Left lung (tissue), 14 donors: ENCODE measurements at regions of chr6 and their contacts with region 1.

Region 1: DNA sequence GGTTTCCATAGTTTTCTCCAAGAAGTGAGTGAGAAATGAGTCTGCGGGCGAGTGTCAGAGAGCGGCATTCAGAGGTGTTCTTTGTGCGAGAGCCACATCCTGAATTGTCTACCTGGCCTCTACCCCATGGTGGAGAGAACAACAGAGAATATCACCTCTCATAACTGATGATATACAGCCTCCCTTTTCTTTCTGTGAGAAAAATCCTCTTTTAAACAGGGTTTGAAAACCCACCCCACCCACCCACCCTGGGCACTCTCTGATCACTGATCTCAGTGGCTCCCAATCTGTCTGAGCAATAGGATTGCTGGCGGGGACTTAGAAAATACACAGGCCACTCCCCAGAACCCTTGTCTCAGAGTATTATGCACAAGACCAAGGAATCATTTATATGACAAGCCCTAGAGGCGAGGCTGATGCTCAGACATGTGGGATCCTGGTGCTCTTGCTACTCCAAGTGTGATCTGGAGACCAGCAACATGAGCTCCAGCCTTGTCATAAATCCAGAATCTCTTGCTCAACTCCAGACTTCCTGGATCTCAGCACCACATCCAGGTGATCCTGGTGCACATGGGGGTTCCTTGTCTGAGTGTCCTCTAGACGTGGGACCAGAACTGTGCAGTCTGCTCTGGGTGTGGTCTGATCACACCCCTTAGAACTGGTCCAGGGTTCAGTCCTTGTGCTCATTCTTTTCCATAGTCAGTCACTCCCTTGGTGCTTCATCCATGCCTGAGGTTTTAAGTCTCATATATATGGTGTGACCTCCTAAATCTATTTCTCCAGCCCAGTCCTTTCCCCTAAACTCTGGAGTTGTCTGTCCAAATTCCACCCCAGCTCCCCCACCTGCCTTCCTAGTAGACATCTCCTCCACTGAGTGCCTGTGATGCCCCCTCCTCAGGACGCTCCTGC is 5.3 kb downstream of the HLA-B start:
- DNase-seq: no peak
- ATAC-seq: no peak
- H3K4me3 ChIP-seq: no peak overlapping the region
- H3K27ac ChIP-seq: no peak overlapping the region
- H3K4me1 ChIP-seq: peaks cover 3 to 30% of the 10 kb centered on the region in 2 donors
- H3K27me3 ChIP-seq: no peaks in the 10 kb centered on the region
- CTCF ChIP-seq: no peak

Region 2: DNA sequence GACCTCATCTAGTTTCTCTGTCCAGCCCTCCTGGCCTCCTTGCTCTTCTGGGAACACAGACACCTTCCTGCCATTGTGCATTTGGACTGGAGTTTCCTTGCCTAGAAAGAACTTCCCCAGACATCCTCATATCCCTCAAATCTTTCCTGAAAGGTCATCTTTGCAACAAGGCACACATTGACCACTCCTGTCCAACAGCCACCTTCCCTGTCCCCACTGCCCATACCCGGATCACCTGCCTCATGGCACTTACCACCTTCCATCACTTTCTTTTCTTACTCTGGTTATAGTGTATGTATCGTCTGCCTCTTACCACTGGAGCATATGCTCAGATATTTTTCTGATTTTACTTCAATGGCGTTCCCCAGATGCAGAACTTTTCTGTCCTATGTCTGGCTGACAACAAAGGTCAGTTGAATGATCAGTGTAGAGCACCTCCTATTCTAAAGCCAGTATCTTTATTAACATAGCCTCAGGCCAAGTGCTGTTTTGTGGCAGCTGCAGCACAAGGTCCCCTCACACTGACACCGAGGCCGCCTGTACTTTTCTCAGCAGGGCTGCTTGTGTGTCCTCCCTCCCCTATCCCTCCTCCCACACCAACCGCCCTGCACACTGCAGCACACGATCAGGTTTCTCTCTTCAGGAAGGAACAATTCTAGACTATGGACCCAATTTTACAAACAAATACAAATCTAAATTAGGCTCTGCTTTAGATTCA is 83.8 kb before region 1 on chr6:
- intact Hi-C with region 1: loop called in 1 of 2 experiments (anchors 2 kb)
- DNase-seq: no peak
- ATAC-seq: no peak
- H3K4me3 ChIP-seq: no peak overlapping the region
- H3K27ac ChIP-seq: no peak overlapping the region
- H3K4me1 ChIP-seq: peaks cover 0 to 39% of the 10 kb centered on the region in 2 donors
- H3K27me3 ChIP-seq: no peaks in the 10 kb centered on the region
- CTCF ChIP-seq: no peak